Activated CD4-positive, alpha-beta memory T cell treated with anti-CD3 and anti-CD28 coated beads for 36 hours (primary cell): ENCODE measurements at regions of chr11 and their contacts with region 1.

Region 1: GRCh38 chr11:88535916-88536547 is 198.5 kb upstream of the CTSC start:
- DNase-seq: no peak
- H3K4me3 Mint-ChIP-seq: no peak overlapping the region
- H3K27ac Mint-ChIP-seq: no peak overlapping the region
- H3K4me1 Mint-ChIP-seq: peaks cover 19% of the 10 kb centered on the region
- H3K27me3 Mint-ChIP-seq: peaks cover 8% of the 10 kb centered on the region

Region 2: DNA sequence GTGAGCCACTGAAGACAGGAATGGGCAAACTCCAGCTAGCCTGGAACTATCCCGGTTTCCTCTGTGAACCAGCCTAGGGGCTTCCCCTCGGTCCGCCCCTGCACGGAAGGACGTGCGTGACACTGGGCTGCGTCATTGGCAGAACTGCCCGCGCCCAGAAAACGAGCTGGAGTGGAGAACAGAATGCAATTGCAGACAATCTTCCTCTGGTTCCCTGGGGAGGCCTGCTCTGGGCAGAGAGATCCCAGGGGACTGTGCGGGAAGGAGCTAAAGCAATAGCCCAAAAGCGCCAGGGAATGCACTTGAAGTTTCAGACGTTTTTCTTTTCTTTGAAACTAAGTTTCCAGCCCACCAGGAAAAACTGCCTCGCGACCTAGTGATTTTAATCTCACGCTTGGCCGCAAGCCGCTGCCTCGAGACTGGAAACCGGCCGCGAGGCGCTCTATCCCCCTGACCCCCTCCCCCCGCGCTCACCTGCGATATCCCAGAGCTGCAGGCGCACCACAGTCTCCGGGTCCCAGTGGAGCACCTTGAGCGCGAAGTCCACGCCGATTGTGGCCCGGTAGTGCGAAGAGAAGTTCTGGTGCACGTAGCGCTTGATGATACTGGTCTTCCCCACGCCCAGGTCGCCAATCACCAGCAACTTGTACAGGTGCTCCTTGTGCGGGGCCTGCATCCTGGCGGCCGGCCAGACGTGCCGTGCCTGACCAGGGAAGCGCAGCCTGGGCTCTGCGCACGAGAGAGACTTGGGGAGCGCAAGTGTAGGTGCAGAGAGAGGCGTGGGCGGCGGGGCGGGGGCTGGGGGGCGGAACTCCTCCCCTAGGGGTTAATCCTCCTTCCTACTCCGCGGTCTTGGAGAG is 361.1 kb before region 1 on chr11 and contains the start of gene RAB38:
- CTCF ChIA-PET with region 1: no interaction called
- POLR2A ChIA-PET with region 1: interaction called, 3 read pairs
- intact Hi-C with region 1: loop called (anchors 1 kb)
- DNase-seq: peak; percentile 74
- H3K4me3 Mint-ChIP-seq: peak within 1 kb of the TSS; percentile 70
- H3K27ac Mint-ChIP-seq: no peak within 1 kb of the TSS
- H3K4me1 Mint-ChIP-seq: peaks cover 37% of the 10 kb centered on the region
- H3K27me3 Mint-ChIP-seq: peaks cover 20% of the 10 kb centered on the region
- total RNA-seq, gene RAB38: 0.76 to 0.97 TPM

Region 3: DNA sequence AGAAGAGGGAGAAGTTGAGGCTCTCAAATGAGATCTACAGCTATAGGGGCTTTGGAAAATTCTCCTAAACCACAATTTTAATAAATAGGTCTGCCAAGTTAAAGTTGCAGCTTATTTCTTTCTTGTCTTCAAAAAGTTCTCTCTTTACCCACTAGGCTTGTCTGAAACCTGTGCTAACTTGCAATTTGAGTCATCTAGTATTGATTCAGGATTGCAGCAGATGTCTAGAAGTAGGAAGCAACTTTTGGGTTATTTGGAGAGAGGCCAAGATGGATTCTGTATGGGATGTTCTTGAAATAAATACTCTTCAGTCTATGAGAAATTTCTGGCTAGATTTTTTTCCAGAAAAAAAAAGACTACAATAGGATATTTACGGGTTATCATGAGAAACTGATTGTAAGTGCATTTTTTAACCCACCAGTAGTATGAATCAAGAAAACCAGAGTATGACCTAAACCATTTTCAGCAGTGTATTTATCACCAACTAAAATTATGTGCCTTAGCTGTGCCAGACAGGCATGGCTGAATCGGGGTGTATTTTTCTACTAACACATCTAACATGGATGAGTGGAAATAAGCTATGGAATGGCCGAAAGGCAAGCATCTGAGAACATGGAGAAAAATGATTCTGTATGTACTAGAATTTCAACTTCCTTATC is 355.9 kb before region 1 on chr11:
- CTCF ChIA-PET with region 1: no interaction called
- POLR2A ChIA-PET with region 1: interaction called, 3 read pairs
- intact Hi-C with region 1: loop called (anchors 1 kb)
- DNase-seq: no peak
- H3K4me3 Mint-ChIP-seq: no peak overlapping the region
- H3K27ac Mint-ChIP-seq: no peak overlapping the region
- H3K4me1 Mint-ChIP-seq: peaks cover 21% of the 10 kb centered on the region
- H3K27me3 Mint-ChIP-seq: peaks cover 24% of the 10 kb centered on the region

Region 4: GRCh38 chr11:88301488-88302140 is 234.4 kb before region 1 on chr11:
- CTCF ChIA-PET with region 1: no interaction called
- POLR2A ChIA-PET with region 1: no interaction called
- intact Hi-C with region 1: loop called (anchors 2 kb)
- DNase-seq: peak; percentile 43
- H3K4me3 Mint-ChIP-seq: peak overlapping the region; percentile 46
- H3K27ac Mint-ChIP-seq: peak overlapping the region; percentile 78
- H3K4me1 Mint-ChIP-seq: peaks cover 32% of the 10 kb centered on the region
- H3K27me3 Mint-ChIP-seq: no peaks in the 10 kb centered on the region

Region 5: DNA sequence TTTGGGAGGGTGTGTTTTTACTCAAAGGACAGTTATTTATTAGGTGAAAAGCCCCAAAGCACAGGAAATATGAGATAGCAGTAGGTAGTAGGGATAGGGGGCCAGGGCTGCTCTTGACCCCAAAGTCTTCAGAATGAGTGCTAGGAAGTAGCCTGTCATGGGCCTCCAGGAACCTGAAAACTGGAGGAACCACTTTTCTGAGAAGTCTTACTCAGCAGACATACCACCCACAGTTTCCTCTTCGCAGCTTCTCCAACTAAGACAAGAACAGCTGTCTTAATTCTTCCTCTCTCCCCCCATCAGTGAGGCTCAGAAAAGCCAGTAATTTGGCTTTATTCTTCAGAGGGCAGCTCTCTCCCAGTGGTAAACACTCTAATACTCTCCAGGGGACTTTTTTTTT is 114.5 kb before region 1 on chr11:
- CTCF ChIA-PET with region 1: no interaction called
- POLR2A ChIA-PET with region 1: interaction called, 4 read pairs
- intact Hi-C with region 1: loop called (anchors 2 kb)
- DNase-seq: peak; percentile 70
- H3K4me3 Mint-ChIP-seq: no peak overlapping the region
- H3K27ac Mint-ChIP-seq: peak overlapping the region; percentile 70
- H3K4me1 Mint-ChIP-seq: peaks cover 42% of the 10 kb centered on the region
- H3K27me3 Mint-ChIP-seq: no peaks in the 10 kb centered on the region

Region 6: DNA sequence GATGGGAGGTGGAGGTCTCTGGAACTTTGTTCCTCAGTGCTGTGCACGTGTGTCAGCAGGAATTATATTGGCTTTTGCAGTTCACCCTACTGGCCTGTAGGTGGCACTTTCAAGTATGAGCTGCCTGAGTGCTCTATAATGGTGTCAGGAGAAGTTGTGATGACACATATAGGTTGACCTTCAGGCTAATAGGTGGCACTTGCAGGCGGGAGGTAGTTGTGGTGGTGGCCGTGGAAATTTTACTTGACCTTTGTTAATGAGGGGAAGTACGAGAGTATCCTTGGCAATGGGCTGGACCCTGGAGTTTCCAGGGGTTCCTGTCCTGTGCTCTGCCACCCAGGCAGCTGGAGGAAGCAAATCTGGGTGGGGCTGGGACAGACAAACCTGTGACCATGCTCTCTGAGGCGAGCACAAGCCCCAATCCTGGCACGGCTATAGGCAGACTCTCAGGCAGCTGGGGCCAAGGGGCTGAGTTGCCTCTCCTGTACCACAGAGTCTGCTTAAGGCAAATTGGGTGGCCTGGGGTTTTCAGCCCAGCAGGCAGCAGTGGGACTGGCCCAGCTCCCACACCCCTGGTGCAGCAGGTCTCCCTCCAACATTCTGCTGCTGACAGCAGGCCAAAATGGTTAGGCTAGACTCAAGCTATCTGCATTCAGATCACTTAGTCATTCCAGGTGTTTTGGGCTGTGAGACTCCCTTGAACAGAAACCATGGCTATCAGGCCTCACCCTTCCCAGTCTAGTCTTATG is 51.0 kb before region 1 on chr11:
- CTCF ChIA-PET with region 1: no interaction called
- POLR2A ChIA-PET with region 1: no interaction called
- intact Hi-C with region 1: loop called (anchors 2 kb)
- DNase-seq: peak; percentile 44
- H3K4me3 Mint-ChIP-seq: no peak overlapping the region
- H3K27ac Mint-ChIP-seq: no peak overlapping the region
- H3K4me1 Mint-ChIP-seq: peaks cover 2% of the 10 kb centered on the region
- H3K27me3 Mint-ChIP-seq: peaks cover 3% of the 10 kb centered on the region